ENCODE measurements at regions of chr3 and their contacts with region 1.

Region 1: GRCh38 chr3:120417272-120417911 is 33.4 kb downstream of the FSTL1 start:
- DNase-seq: peak; percentile 43
- H3K4me3 ChIP-seq: peak overlapping the region; percentile 7 to 52 (median 34)
- H3K27ac ChIP-seq: peak overlapping the region; percentile 51 to 80 (median 73)
- H3K4me1 ChIP-seq: peaks cover 21 to 63% (median 29%) of the 10 kb centered on the region in 3 donors
- H3K27me3 ChIP-seq: no peaks in the 10 kb centered on the region
- CTCF ChIP-seq: peak; percentile 80 to 94 (median 90)
- POLR2A ChIP-seq: no peak

Region 2: DNA sequence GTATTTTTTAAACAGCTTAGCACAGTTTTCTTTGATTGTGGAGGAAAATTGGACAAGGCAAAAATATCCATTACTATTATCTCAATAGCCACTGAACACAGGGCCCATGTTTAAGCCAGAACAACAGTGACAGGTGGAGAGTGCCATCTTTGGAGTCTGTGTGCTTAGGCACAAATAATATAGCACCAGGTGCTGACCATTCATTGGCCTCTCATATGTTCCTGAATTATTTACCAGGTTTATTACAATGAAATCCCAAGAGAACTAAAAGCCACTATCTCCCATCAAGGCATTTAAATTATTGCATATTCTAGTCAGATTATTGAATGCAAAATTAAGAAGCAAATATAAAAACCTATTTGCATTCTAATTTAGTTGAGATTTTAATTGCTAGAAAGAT is 172.0 kb before region 1 on chr3:
- intact Hi-C with region 1: loop called (anchors 10 kb)
- DNase-seq: no peak
- H3K4me3 ChIP-seq: no peak overlapping the region
- H3K27ac ChIP-seq: no peak overlapping the region
- H3K4me1 ChIP-seq: no peaks in the 10 kb centered on the region
- H3K27me3 ChIP-seq: no peaks in the 10 kb centered on the region
- CTCF ChIP-seq: no peak
- POLR2A ChIP-seq: no peak

Region 3: DNA sequence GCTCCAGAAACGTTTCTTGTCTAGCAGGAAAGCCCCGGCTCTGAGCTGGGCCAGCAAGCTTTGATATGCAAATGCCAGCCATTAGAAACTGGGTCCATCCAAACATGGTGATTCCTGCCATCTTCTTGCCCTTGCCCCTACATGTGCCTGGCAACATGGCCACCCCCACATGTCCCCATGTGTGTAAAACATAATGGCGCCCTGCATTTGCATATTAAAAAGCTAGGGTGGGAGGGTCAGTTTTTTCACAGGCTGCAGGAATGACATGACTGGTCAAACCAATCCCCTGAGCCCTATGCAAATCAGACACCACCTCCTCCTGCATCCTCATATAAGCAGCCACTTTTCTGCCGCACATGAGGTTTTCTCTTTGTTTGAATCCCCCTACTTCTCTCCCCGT is 153.6 kb before region 1 on chr3:
- intact Hi-C with region 1: no loop called
- DNase-seq: no peak
- H3K4me3 ChIP-seq: no peak overlapping the region
- H3K27ac ChIP-seq: no peak overlapping the region
- H3K4me1 ChIP-seq: no peaks in the 10 kb centered on the region
- H3K27me3 ChIP-seq: no peaks in the 10 kb centered on the region
- CTCF ChIP-seq: no peak
- POLR2A ChIP-seq: no peak